Right ventricle myocardium inferior (tissue), 1 donor: ENCODE measurements at regions of chr6 and their contacts with region 1.

Region 1: DNA sequence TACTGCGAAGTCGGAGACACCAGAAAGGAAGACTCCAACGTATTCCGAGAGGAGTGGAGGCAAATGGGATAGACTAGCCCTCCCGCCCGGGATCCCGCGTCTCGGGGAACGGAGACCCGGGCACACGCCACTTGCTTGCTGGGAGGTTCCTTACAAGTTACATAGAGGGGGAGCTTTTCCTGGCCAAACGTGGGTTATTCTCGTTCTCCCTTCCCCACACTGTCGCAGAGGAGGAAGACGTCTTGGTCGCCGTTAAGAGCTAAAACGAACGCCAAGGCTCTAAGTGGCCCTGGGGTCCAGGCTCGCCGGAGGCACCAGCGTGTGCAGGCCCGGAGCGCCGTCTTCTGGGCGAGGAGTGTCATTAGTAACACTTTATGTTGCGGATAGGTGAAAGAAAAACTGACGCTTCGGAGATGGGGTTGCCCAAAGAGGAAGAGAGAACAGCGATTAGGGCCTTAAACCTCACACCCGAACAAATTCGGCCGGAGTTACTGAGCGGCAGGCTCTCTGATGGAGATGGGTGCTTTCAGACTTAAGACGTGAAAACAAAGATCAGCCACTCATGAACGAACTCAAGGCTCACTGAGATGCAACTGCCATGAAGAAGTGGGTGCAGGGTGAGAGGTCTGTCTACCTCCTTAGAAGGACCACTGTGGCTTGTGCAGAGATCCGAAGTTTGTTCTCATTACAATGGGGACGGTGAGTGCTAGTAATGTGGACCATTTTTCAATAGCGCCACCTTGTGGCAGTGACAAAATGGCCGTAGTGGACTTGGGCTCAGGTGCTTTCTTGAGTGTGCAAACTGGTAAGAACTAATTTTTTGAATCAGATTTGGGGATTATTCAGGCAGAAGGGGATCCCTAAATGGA is 11.7 kb upstream of the ZNF311 start:
- DNase-seq: peak; percentile 85
- ATAC-seq: peak; percentile 91

Region 2: GRCh38 chr6:28683944-28684538 is 332.8 kb before region 1 on chr6:
- intact Hi-C with region 1: loop called (anchors 2 kb)
- DNase-seq: no peak
- ATAC-seq: no peak

Region 3: GRCh38 chr6:29082457-29082856 is 65.7 kb after region 1 on chr6:
- intact Hi-C with region 1: no loop called
- DNase-seq: no peak
- ATAC-seq: no peak